Dorsolateral prefrontal cortex (tissue), 120 donors: ENCODE measurements at regions of chr1 and their contacts with region 1.

Region 1: GRCh38 chr1:151292207-151293030 is 10.3 kb downstream of the ZNF687 start:
- DNase-seq: no peak
- H3K4me3 ChIP-seq: no peak overlapping the region
- H3K27ac ChIP-seq: peak overlapping the region in 33 of 59 donors; percentile 1 to 88 (median 35)
- H3K27me3 ChIP-seq: no peaks in the 10 kb centered on the region
- CTCF ChIP-seq: no peak

Region 2: GRCh38 chr1:151340870-151341754 is 48.7 kb after region 1 on chr1:
- intact Hi-C with region 1: loop called in 1 of 2 experiments (anchors 5 kb)
- DNase-seq: peak in 5 of 10 donors; percentile 32 to 57 (median 49)
- H3K4me3 ChIP-seq: peak overlapping the region in 8 of 59 donors; percentile 3 to 38 (median 12)
- H3K27ac ChIP-seq: peak overlapping the region in 46 of 59 donors; percentile 1 to 82 (median 56)
- H3K27me3 ChIP-seq: no peaks in the 10 kb centered on the region
- CTCF ChIP-seq: peak; percentile 59 to 96 (median 84)

Region 3: DNA sequence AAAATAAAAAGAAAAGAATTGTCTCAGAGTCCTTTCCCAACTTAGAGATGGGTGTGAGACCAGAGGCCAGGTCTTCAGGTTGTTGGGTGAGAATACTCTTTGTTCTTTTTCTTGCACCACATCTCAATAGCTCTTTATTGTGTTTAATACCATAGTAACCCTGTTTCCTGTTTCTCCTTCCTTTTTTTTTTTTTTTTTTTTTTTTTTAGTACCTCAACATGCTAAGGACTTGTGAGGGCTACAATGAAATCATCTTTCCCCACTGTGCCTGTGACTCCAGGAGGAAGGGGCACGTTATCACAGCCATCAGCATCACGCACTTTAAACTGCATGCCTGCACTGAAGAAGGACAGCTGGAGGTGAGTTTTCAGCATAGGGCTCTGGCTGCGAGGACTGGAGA is 399.8 kb after region 1 on chr1:
- intact Hi-C with region 1: no loop called
- DNase-seq: no peak
- H3K4me3 ChIP-seq: no peak overlapping the region
- H3K27ac ChIP-seq: peak overlapping the region in 6 of 59 donors; percentile 2 to 46 (median 26)
- H3K27me3 ChIP-seq: no peaks in the 10 kb centered on the region
- CTCF ChIP-seq: no peak